BJ (cell line): ENCODE measurements at regions of chr3 and their contacts with region 1.

Region 1: GRCh38 chr3:73624821-73625665 is at the start of gene PDZRN3:
- DNase-seq: no peak
- H3K4me3 ChIP-seq: peak within 1 kb of the TSS; percentile 80
- H3K27me3 ChIP-seq: no peaks in the 10 kb centered on the region
- CTCF ChIP-seq: no peak
- polyA plus RNA-seq, gene PDZRN3: 4.9 and 5.1 TPM in 2 replicates

Region 2: GRCh38 chr3:73614411-73614810 is 10.6 kb before region 1 on chr3:
- CTCF ChIA-PET with region 1: interaction called, 13 read pairs
- POLR2A ChIA-PET with region 1: no interaction called
- DNase-seq: no peak
- H3K4me3 ChIP-seq: no peak overlapping the region
- H3K27me3 ChIP-seq: no peaks in the 10 kb centered on the region
- CTCF ChIP-seq: no peak

Region 3: GRCh38 chr3:73766599-73767381 is 141.7 kb after region 1 on chr3:
- CTCF ChIA-PET with region 1: interaction called, 11 read pairs
- POLR2A ChIA-PET with region 1: no interaction called
- DNase-seq: peak; percentile 82
- H3K4me3 ChIP-seq: peak overlapping the region; percentile 30
- H3K27me3 ChIP-seq: no peaks in the 10 kb centered on the region
- CTCF ChIP-seq: no peak

Region 4: GRCh38 chr3:73848173-73848906 is 223.3 kb after region 1 on chr3:
- CTCF ChIA-PET with region 1: interaction called, 19 read pairs
- POLR2A ChIA-PET with region 1: interaction called, 3 read pairs
- DNase-seq: no peak
- H3K4me3 ChIP-seq: no peak overlapping the region
- H3K27me3 ChIP-seq: no peaks in the 10 kb centered on the region; the same call in 1 of the 2 replicates
- CTCF ChIP-seq: peak; percentile 70